ENCODE measurements at regions of chr15 and their contacts with region 1.

Region 1: DNA sequence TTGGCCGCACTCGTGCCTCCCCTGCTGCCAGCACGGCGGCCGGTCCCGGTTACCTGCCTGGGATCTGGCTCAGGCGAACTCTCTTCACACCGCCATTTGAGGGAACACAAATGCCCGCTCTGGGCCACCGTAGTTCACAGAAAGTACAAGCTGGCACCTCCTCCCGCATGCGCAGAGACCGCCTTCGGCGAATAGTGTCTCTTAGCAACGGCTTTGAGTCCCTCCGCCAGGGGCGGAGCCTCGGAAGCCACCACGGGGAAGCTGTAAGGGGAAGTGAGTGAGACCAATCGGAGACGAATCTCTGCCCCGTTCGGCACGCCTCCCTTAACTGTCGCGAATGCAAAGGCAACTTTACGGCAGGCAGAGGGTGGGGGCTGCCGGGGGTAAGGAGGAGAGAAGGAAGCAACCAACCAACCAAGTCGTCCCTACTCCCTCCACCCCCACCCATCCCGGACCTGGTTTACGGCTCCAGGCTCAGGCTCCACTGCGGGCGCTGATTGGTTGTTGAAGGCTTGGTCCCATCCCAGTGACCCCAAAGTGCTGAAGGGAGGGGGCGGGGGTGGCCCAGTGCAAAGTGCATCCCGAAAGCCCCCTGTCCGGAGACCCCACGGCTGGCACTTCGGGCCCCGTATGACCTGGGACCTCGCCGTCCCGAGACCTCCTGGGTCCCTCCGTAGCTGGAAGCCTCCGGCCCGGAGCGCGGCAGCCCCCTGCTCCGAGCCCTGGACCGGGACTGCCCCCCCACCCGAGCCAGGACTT is at the starts of genes ASB7 and LINS1:
- DNase-seq: peak; percentile 100
- ATAC-seq: peak; percentile 86
- H3K4me3 ChIP-seq: peak within 1 kb of the TSS; percentile 67 to 95 (median 92)
- H3K4me3 Mint-ChIP-seq: no peak within 1 kb of the TSS
- H3K27ac ChIP-seq: peak within 1 kb of the TSS; percentile 77 to 93
- H3K27ac Mint-ChIP-seq: no peak within 1 kb of the TSS
- H3K4me1 ChIP-seq: peaks cover 20% of the 10 kb centered on the region in 2 donors
- H3K4me1 Mint-ChIP-seq: peaks cover 42% of the 10 kb centered on the region
- H3K27me3 ChIP-seq: no peaks in the 10 kb centered on the region
- H3K27me3 Mint-ChIP-seq: no peaks in the 10 kb centered on the region
- CTCF ChIP-seq: no peak
- total RNA-seq, gene ASB7: 25.0 and 26.5 TPM in 2 replicates
- total RNA-seq, gene LINS1: 39.6 and 46.4 TPM in 2 replicates

Region 2: GRCh38 chr15:99507504-99508310 is 1094.5 kb before region 1 on chr15:
- CTCF ChIA-PET with region 1: no interaction called
- POLR2A ChIA-PET with region 1: no interaction called
- intact Hi-C with region 1: loop called (anchors 5 kb)
- DNase-seq: peak; percentile 47
- ATAC-seq: no peak
- H3K4me3 ChIP-seq: peak overlapping the region in 1 of 5 experiments; percentile 5
- H3K4me3 Mint-ChIP-seq: peak overlapping the region; percentile 79
- H3K27ac ChIP-seq: peak overlapping the region; percentile 50 to 90
- H3K27ac Mint-ChIP-seq: peak overlapping the region; percentile 86
- H3K4me1 ChIP-seq: peaks cover 87 to 88% of the 10 kb centered on the region in 2 donors
- H3K4me1 Mint-ChIP-seq: peaks cover 91% of the 10 kb centered on the region
- H3K27me3 ChIP-seq: no peaks in the 10 kb centered on the region
- H3K27me3 Mint-ChIP-seq: no peaks in the 10 kb centered on the region
- CTCF ChIP-seq: no peak

Region 3: DNA sequence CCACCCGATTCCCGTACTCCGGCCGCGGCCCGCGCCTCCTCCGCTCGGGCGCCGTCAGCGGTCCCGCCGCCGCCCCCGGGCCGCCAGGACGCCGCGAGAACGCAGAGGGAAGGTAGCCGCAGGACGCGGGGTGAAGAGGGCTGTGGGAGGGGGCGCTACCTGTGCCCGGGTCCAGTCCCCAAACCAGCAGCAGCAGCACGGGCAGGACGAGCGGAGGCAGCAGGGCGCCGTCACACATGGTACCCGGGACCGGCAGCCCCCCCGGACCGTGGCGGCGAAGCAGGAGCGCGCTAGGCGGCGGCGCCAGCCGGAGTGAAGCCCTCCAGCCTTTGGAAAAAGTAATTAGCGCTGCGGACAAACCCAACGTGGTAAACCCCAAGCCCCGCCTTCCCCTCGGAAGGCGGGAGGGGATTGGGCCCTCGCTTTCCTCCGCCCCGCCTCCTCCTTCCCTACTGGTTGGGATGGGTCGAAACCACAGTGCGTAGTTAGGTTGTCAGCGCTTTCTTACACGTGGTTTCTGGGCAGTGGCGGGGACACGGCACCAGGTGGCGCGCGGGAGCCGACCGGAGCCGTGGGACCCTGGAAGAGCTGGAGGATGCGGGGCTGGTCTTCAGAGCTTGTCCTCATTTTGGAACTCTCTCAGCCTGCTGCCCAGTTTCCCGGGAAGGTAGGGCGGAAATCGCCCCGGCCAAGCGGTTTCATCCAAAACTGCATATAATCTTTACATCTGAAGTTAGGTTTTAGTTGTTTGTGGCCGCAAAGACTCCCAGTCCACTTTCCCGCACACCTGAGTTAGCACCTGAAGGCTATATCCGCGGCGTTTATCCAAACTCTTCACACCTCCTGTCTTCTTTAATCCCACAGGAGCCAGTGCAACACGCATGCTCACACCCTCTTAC is 260.3 kb before region 1 on chr15 and contains the start of gene ADAMTS17:
- CTCF ChIA-PET with region 1: interaction called, 3 read pairs
- POLR2A ChIA-PET with region 1: no interaction called
- intact Hi-C with region 1: loop called (anchors 1 kb)
- DNase-seq: peak; percentile 90
- ATAC-seq: peak; percentile 99
- H3K4me3 ChIP-seq: peak within 1 kb of the TSS in 4 of 5 experiments; percentile 41 to 63 (median 53)
- H3K4me3 Mint-ChIP-seq: peak within 1 kb of the TSS; percentile 66
- H3K27ac ChIP-seq: no peak within 1 kb of the TSS
- H3K27ac Mint-ChIP-seq: peak within 1 kb of the TSS; percentile 3
- H3K4me1 ChIP-seq: peaks cover 9 to 12% of the 10 kb centered on the region in 2 donors
- H3K4me1 Mint-ChIP-seq: peaks cover 8% of the 10 kb centered on the region
- H3K27me3 ChIP-seq: peaks cover 0 to 44% (median 22%) of the 10 kb centered on the region in 4 experiments
- H3K27me3 Mint-ChIP-seq: peaks cover 41% of the 10 kb centered on the region
- CTCF ChIP-seq: peak; percentile 82
- total RNA-seq, gene ADAMTS17: 0.10 and 0.51 TPM in 2 replicates

Region 4: GRCh38 chr15:100918034-100918689 is 315.9 kb after region 1 on chr15:
- CTCF ChIA-PET with region 1: interaction called, 5 read pairs
- POLR2A ChIA-PET with region 1: interaction called, 3 read pairs
- intact Hi-C with region 1: loop called (anchors 1 kb)
- DNase-seq: peak; percentile 84
- ATAC-seq: peak; percentile 72
- H3K4me3 ChIP-seq: peak overlapping the region; percentile 71 to 89 (median 87)
- H3K4me3 Mint-ChIP-seq: peak overlapping the region; percentile 86
- H3K27ac ChIP-seq: no peak overlapping the region
- H3K27ac Mint-ChIP-seq: peak overlapping the region; percentile 87
- H3K4me1 ChIP-seq: peaks cover 30 to 45% of the 10 kb centered on the region in 2 donors
- H3K4me1 Mint-ChIP-seq: peaks cover 39% of the 10 kb centered on the region
- H3K27me3 ChIP-seq: no peaks in the 10 kb centered on the region
- H3K27me3 Mint-ChIP-seq: peaks cover 2% of the 10 kb centered on the region
- CTCF ChIP-seq: peak; percentile 96

Region 5: DNA sequence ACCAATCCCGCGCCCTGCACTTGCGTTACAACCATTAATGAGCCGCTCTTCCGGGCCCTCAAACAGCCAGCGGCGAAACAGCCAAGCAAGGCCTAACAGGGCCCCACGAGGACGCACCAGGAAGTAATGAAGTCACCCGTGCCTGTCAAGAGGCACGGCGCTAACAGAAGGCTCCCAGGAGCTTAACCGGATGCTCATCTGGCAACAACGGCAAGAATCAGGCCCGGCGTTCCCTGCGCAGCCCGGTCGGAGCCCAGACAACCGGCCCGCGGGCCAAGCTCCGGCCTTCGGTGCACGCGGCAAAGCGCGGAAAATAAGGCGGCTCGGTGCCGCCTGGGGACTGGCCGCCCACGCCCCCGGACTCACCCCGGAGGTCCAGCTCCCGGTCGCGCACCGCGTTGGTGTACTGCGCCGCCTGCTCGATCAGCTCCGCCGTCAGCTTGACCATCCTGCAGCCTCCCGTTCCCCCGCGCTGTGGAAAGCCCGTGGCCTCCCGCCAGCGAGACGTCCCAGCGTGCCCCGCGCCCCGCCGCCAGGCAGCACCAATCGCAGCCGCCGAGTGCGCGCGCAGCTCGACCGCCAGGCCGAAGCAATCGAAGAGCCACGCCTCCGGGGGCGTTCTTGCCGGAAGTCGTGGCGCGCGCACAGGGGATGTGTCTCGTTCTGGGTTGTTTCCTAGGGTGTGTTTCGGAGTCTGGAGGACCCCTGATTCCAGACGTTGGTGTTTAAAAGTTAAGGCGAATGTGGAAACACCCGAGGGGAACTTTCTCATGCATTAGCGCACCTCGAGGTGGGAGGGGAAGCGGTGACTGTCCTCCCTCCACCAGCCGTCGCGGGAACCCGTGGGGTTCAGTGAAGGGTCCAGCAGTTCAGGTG is 692.7 kb after region 1 on chr15 and contains the start of gene SNRPA1:
- CTCF ChIA-PET with region 1: no interaction called
- POLR2A ChIA-PET with region 1: no interaction called
- intact Hi-C with region 1: loop called (anchors 1 kb)
- DNase-seq: peak; percentile 96
- ATAC-seq: peak; percentile 82
- H3K4me3 ChIP-seq: peak within 1 kb of the TSS; percentile 70 to 96 (median 93)
- H3K4me3 Mint-ChIP-seq: peak within 1 kb of the TSS; percentile 96
- H3K27ac ChIP-seq: peak within 1 kb of the TSS; percentile 91 to 93
- H3K27ac Mint-ChIP-seq: peak within 1 kb of the TSS; percentile 98
- H3K4me1 ChIP-seq: peaks cover 29 to 30% of the 10 kb centered on the region in 2 donors
- H3K4me1 Mint-ChIP-seq: peaks cover 45% of the 10 kb centered on the region
- H3K27me3 ChIP-seq: no peaks in the 10 kb centered on the region
- H3K27me3 Mint-ChIP-seq: no peaks in the 10 kb centered on the region
- CTCF ChIP-seq: no peak
- total RNA-seq, gene SNRPA1: 104 and 113 TPM in 2 replicates